Sigmoid colon (tissue), 7 donors: ENCODE measurements at regions of chr14 and their contacts with region 1.

Region 1: GRCh38 chr14:51071857-51072256 is 23.0 kb downstream of the TRIM9 start:
- DNase-seq: no peak
- H3K4me3 ChIP-seq: no peak overlapping the region
- H3K27ac ChIP-seq: peak overlapping the region in 3 of 4 donors; percentile 15 to 68 (median 57)
- H3K4me1 ChIP-seq: peaks cover 0 to 69% (median 44%) of the 10 kb centered on the region in 4 donors
- H3K27me3 ChIP-seq: no peaks in the 10 kb centered on the region
- CTCF ChIP-seq: no peak
- EP300 ChIP-seq: no peak
- POLR2A ChIP-seq: no peak

Region 2: DNA sequence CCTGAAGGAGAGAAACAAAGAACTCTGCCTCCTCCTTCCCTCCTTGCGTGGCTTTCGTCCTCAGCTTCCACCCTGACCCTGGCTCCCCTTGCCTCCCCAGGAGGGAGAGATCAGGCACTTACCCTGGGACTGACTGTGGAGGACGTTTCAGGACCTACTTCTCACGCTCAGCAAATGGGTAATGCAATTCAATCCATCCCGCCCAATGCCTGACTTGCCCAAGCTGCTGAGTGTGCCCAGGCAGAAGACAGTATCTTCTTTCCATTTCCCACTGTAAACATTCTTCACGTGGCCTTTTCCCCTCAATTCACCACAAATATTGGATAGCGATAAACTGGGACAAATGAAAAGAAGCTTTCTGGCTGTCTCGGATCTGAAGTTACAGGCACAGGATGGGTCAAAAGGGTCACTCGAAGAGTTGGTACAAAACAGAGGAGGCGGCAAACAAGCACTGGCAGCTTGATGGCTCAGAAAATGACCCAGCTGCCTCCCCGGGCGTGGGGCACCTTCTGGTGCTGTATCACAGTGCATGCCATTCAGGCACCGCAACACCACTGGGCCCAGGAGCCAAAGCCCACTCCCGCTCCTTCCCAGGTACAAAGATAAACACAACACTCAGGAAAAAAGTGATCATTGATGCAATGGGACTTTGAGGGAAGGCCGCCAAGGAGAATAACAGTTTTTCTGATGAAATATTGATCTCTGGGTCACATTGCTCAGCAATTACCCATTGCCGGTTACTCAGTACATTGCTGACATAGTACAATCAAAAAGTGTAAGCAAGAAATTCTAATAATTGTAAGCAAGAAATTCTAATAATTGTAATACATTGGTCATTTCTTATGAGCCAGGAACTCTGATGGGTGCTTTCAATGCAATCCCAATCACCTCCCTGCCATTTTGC is 42.8 kb before region 1 on chr14:
- intact Hi-C with region 1: loop called (anchors 5 kb)
- DNase-seq: no peak
- H3K4me3 ChIP-seq: no peak overlapping the region
- H3K27ac ChIP-seq: no peak overlapping the region
- H3K4me1 ChIP-seq: peaks cover 0 to 29% (median 19%) of the 10 kb centered on the region in 4 donors
- H3K27me3 ChIP-seq: no peaks in the 10 kb centered on the region
- CTCF ChIP-seq: no peak
- EP300 ChIP-seq: no peak
- POLR2A ChIP-seq: no peak